Kidney (tissue), 22 donors: ENCODE measurements at regions of chr18 and their contacts with region 1.

Region 1: DNA sequence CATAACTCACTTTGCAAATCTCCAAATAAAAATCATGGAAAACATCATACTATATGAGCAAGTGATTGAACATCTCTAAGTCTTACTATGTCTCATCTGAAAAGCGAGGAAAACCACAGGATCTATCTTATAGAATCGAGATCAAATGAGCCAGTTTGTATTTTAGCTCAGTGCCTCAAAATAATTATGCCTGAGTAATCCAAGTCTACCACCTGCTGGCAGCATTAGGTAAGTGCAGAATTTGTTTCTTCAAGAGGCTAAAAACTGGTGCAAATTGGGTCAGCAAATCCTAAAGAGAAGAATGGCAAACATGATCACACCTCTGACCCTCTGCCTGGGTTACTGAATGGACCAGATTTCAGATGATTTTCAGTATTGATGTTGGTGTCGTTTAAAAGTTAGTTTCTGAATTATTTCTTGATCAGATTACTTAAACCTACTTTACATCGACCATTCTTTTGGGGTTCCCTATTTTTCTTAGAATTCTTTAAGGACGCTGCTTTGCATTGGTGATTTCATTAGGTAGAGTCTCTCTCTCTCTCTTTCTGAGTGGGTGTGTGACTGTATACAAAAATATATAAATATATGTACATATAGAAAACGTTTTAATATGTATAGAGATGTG is 12.7 kb upstream of the FHOD3 start:
- DNase-seq: peak in 3 of 5 donors; percentile 35 to 88 (median 78)
- H3K4me3 ChIP-seq: no peak overlapping the region
- H3K27ac ChIP-seq: no peak overlapping the region
- H3K4me1 ChIP-seq: peaks cover 0 to 3% (median 0%) of the 10 kb centered on the region in 3 donors
- H3K27me3 ChIP-seq: no peaks in the 10 kb centered on the region
- CTCF ChIP-seq: peak; percentile 91

Region 2: GRCh38 chr18:36015629-36016028 is 269.2 kb before region 1 on chr18:
- intact Hi-C with region 1: loop called (anchors 10 kb)
- DNase-seq: no peak
- H3K4me3 ChIP-seq: no peak overlapping the region
- H3K27ac ChIP-seq: no peak overlapping the region
- H3K4me1 ChIP-seq: peaks cover 0 to 2% (median 0%) of the 10 kb centered on the region in 3 donors
- H3K27me3 ChIP-seq: no peaks in the 10 kb centered on the region
- CTCF ChIP-seq: no peak

Region 3: DNA sequence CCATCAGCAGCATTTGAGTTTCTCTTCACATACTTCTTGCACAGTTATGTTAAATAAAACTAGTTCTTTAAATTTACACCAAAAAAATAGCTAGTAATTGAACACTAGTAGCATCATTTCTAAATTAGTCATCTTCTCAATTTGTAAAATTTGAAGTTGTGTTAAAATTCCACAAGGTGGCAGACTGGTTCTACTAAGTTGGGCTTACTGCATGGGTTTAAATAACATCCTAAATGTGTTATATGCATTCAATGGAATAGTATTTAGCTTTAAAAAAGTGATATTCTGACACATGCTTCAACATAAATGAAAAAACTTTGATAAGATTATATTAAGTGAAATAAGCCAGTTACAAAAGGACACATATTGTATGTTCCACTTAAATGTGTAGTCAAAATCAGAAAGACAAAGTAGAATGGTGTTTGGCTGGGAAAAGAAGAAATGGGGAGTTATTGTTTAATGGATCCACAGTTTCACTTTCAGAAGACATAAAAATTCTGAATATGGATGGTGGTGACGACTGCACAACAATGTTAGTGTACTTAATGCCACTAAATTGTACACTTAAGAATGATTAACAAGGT is 188.8 kb before region 1 on chr18:
- intact Hi-C with region 1: loop called (anchors 10 kb)
- DNase-seq: peak in 2 of 5 donors; percentile 42 to 54
- H3K4me3 ChIP-seq: no peak overlapping the region
- H3K27ac ChIP-seq: no peak overlapping the region
- H3K4me1 ChIP-seq: no peaks in the 10 kb centered on the region
- H3K27me3 ChIP-seq: no peaks in the 10 kb centered on the region
- CTCF ChIP-seq: peak; percentile 59

Region 4: GRCh38 chr18:36349552-36349951 is 64.8 kb after region 1 on chr18:
- intact Hi-C with region 1: no loop called
- DNase-seq: peak in 4 of 5 donors; percentile 39 to 76 (median 72)
- H3K4me3 ChIP-seq: no peak overlapping the region
- H3K27ac ChIP-seq: peak overlapping the region; percentile 88 to 94
- H3K4me1 ChIP-seq: peaks cover 4 to 45% (median 37%) of the 10 kb centered on the region in 3 donors
- H3K27me3 ChIP-seq: no peaks in the 10 kb centered on the region
- CTCF ChIP-seq: no peak

Region 5: GRCh38 chr18:36451454-36452251 is 166.9 kb after region 1 on chr18:
- intact Hi-C with region 1: no loop called
- DNase-seq: no peak
- H3K4me3 ChIP-seq: no peak overlapping the region
- H3K27ac ChIP-seq: no peak overlapping the region
- H3K4me1 ChIP-seq: peaks cover 0 to 6% (median 4%) of the 10 kb centered on the region in 3 donors
- H3K27me3 ChIP-seq: no peaks in the 10 kb centered on the region
- CTCF ChIP-seq: no peak

Region 6: DNA sequence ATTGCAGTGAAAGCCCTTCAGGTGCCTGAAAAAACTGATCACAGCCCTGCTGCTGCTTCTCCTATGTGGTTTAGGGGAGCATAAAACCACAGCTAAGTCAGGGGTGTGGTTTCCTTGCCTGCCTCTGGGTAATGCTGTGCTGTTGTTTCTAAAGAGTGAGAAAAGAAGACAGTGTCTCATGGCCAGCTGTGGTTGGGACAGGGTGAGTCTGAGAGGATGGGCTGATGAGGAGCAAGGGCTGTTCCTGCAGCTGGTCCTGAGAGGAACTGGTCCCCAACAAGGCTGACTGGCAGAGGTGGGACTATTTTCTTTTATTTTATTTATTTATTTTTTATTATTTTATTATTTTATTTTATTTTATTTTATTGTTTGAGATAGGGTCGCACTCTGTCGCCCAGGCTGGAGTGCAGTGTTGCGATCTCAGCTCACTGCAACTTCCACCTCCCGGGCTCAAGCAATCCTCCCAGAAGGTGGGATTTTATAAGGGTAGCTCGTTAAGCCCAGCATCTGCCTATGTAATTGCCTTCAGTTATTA is 249.4 kb after region 1 on chr18:
- intact Hi-C with region 1: no loop called
- DNase-seq: no peak
- H3K4me3 ChIP-seq: no peak overlapping the region
- H3K27ac ChIP-seq: no peak overlapping the region
- H3K4me1 ChIP-seq: no peaks in the 10 kb centered on the region
- H3K27me3 ChIP-seq: no peaks in the 10 kb centered on the region
- CTCF ChIP-seq: no peak

Region 7: GRCh38 chr18:36821681-36822080 is 536.9 kb after region 1 on chr18:
- intact Hi-C with region 1: no loop called
- DNase-seq: no peak
- H3K4me3 ChIP-seq: no peak overlapping the region
- H3K27ac ChIP-seq: no peak overlapping the region
- H3K4me1 ChIP-seq: no peaks in the 10 kb centered on the region
- H3K27me3 ChIP-seq: no peaks in the 10 kb centered on the region
- CTCF ChIP-seq: no peak